Activated CD4-positive, alpha-beta memory T cell treated with anti-CD3 and anti-CD28 coated beads, Interleukin-2, amount 10 ng/mL, durations not matched to agents 7 days and 5 days (primary cell): ENCODE measurements at regions of chr2 and their contacts with region 1.

Region 1: GRCh38 chr2:96024336-96025193 is 10.2 kb downstream of the GPAT2 start:
- DNase-seq: no peak
- H3K4me3 Mint-ChIP-seq: no peak overlapping the region
- H3K27ac Mint-ChIP-seq: no peak overlapping the region
- H3K4me1 Mint-ChIP-seq: peaks cover 3% of the 10 kb centered on the region
- H3K27me3 Mint-ChIP-seq: no peaks in the 10 kb centered on the region

Region 2: DNA sequence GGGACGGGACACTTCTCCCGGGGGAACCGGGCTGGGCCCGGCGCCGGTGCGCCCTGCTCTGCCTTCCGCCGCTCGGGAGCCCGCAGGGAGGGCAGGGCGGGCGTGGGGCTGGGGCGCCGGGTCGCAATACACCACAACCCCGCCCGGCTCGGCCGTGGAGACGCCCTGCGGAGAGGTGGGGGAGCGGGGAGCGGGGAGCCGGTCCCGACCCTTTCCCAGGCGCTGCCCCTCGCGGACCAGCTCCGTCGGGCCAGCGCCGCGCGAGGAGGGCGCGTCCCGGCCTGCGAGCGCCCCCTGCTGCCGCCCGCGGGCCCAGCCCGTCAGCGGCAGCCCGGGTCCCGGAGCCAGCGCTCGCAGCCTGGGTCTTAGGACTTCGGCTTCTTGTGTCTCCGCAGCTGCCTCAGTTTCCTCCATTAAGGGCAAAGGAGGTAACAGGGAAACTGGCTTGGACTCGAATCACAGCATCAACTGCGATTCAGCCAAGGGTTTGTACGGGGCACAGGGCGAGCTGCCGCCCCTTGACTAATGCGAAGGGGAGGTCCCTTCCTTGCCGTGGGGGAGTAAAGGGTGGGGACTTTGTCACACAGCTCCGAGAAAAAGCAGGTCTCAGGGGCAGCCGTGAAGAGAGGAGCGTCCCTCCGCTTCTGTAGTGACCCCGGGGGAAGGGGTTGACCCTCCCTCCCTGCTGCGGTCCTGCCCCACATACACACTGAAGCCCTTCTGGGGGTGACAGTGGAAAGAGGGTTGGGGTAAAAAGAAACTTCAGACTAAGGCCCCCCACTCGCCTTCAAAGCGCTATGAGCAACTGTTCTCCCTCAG is 92.5 kb after region 1 on chr2:
- CTCF ChIA-PET with region 1: interaction called, 20 read pairs
- POLR2A ChIA-PET with region 1: interaction called, 3 read pairs
- DNase-seq: peak; percentile 65
- H3K4me3 Mint-ChIP-seq: no peak overlapping the region
- H3K27ac Mint-ChIP-seq: no peak overlapping the region
- H3K4me1 Mint-ChIP-seq: peaks cover 8% of the 10 kb centered on the region
- H3K27me3 Mint-ChIP-seq: peaks cover 46% of the 10 kb centered on the region

Region 3: GRCh38 chr2:96188821-96189526 is 164.4 kb after region 1 on chr2:
- CTCF ChIA-PET with region 1: no interaction called
- POLR2A ChIA-PET with region 1: no interaction called
- DNase-seq: no peak
- H3K4me3 Mint-ChIP-seq: no peak overlapping the region
- H3K27ac Mint-ChIP-seq: no peak overlapping the region
- H3K4me1 Mint-ChIP-seq: peaks cover 16% of the 10 kb centered on the region
- H3K27me3 Mint-ChIP-seq: no peaks in the 10 kb centered on the region